BJ (cell line): ENCODE measurements at regions of chr5 and their contacts with region 1.

Region 1: GRCh38 chr5:79938468-79938867 is 52.6 kb downstream of the MTX3 start:
- DNase-seq: no peak
- H3K4me3 ChIP-seq: no peak overlapping the region
- H3K27me3 ChIP-seq: peaks cover 2% of the 10 kb centered on the region; the same call in 1 of the 2 replicates
- CTCF ChIP-seq: no peak

Region 2: DNA sequence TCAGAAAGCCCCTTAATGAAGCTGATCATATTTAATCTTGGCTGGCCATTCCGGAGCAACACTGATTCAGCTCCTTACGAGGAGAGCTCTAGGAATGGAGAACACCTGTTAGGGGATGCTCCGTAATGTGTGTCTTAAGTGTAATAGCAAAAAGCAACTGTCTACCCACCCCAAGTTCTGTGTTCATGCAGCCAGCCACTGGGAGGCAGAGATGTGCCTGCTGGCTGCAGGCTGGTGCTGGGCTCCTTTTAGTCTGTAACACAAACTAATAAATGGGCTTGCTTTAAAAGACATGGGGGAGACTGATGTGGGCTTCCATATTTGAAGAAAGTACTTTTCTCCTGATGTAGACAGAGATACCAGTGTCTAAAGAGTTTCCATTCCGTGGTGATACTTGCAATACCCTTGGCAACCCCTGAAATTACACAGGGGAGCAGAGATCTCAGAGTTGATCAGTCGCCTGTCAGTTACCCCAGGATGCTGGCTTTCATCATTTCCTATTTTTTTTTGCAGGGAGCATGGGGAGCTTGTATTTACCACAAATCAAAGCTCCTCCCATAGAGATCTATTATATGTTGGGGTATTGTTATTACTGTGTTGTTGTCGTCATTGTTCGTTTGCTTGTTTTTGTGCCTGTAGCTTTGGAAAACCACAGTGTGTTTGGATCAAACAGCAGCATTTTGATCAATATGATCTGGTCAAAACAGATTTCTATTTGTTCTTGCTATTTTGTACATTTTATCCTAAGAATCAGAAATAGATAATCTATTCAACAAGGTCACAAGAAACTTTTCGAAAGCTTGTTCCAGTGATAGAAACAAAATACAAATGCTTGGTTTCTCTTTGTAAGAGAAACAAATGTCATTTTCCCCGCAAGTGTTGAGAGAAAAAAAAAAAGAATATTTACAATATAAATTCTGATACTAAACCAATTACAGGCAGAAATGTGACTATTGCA is 13.3 kb before region 1 on chr5:
- CTCF ChIA-PET with region 1: no interaction called
- POLR2A ChIA-PET with region 1: no interaction called
- DNase-seq: no peak
- H3K4me3 ChIP-seq: no peak overlapping the region
- H3K27me3 ChIP-seq: 0 out of 2 replicates have a peak, but pooled peaks cover 2% of the 10 kb centered on the region
- CTCF ChIP-seq: no peak

Region 3: GRCh38 chr5:80059354-80059980 is 121.0 kb after region 1 on chr5:
- CTCF ChIA-PET with region 1: no interaction called
- POLR2A ChIA-PET with region 1: interaction called, 12 read pairs
- DNase-seq: no peak
- H3K4me3 ChIP-seq: no peak overlapping the region
- H3K27me3 ChIP-seq: no peaks in the 10 kb centered on the region
- CTCF ChIP-seq: no peak